ENCODE measurements at regions of chr2 and their contacts with region 1.

Region 1: GRCh38 chr2:222707689-222708525 is 36.4 kb downstream of the MOGAT1 start:
- DNase-seq: peak; percentile 64
- ATAC-seq: peak; percentile 55
- H3K4me3 ChIP-seq: no peak overlapping the region
- H3K27ac ChIP-seq: no peak overlapping the region
- H3K4me1 ChIP-seq: peaks cover 8 to 24% of the 10 kb centered on the region in 2 experiments; a peak in 3 of 4 replicates
- H3K27me3 ChIP-seq: no peaks in the 10 kb centered on the region
- CTCF ChIP-seq: peak; percentile 87 to 90 (median 89)
- POLR2A ChIP-seq: no peak
- RAD21 ChIP-seq: peak; percentile 84

Region 2: DNA sequence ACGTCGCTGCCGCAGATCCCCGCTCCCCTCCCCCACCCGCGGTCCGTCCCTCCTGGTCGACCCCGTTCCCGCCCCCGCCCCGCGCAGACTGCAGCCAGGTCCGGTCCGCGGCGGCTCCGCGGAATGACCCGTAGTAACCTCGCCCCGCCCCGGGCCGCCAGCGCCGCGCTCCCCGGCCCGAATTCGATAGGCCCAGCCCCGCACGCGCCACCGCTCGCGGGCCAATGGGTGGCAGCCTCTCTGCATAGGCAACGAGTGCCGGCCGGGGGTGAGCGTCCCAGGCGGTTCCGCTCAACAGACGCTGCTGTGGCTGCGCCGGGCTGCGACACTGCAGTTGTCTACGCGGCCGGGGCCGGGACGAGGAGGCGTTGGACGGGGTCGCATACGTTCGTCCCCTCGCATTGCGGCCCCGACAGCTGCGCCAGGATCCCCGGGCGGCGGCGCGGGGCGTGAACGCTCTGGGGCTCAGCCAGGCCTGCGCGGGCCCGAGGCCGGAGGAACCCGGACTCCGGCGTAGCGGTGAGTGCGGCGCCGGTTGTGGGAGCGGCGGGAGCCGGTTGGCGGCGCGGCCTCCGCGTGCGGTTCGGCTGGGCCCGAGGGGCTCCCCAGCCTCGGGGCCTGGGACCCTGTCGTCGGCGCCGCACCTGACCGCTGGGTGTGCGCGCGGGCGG is 153.0 kb after region 1 on chr2 and contains the start of gene ACSL3:
- CTCF ChIA-PET with region 1: interaction called, 4 read pairs
- POLR2A ChIA-PET with region 1: interaction called, 3 read pairs
- RAD21 ChIA-PET with region 1: no interaction called
- intact Hi-C with region 1: loop called (anchors 1 kb)
- DNase-seq: peak; percentile 78
- ATAC-seq: peak; percentile 96
- H3K4me3 ChIP-seq: peak within 1 kb of the TSS; percentile 74 to 86
- H3K27ac ChIP-seq: peak within 1 kb of the TSS; percentile 91
- H3K4me1 ChIP-seq: peaks cover 33 to 44% of the 10 kb centered on the region in 2 experiments
- H3K27me3 ChIP-seq: no peaks in the 10 kb centered on the region
- CTCF ChIP-seq: no peak
- POLR2A ChIP-seq: peak; percentile 97
- RAD21 ChIP-seq: no peak
- total RNA-seq, gene ACSL3: 142 TPM

Region 3: GRCh38 chr2:222939208-222939856 is 231.4 kb after region 1 on chr2:
- CTCF ChIA-PET with region 1: interaction called, 15 read pairs
- POLR2A ChIA-PET with region 1: no interaction called
- RAD21 ChIA-PET with region 1: no interaction called
- intact Hi-C with region 1: no loop called
- DNase-seq: peak; percentile 56
- ATAC-seq: peak; percentile 98
- H3K4me3 ChIP-seq: no peak overlapping the region
- H3K27ac ChIP-seq: no peak overlapping the region
- H3K4me1 ChIP-seq: 0 out of 4 replicates have a peak, but pooled peaks cover 3 to 7% of the 10 kb centered on the region in 2 experiments
- H3K27me3 ChIP-seq: no peaks in the 10 kb centered on the region
- CTCF ChIP-seq: peak; percentile 85 to 98 (median 85)
- POLR2A ChIP-seq: no peak
- RAD21 ChIP-seq: peak; percentile 80